ENCODE measurements at regions of chr6 and their contacts with region 1.

Region 1: DNA sequence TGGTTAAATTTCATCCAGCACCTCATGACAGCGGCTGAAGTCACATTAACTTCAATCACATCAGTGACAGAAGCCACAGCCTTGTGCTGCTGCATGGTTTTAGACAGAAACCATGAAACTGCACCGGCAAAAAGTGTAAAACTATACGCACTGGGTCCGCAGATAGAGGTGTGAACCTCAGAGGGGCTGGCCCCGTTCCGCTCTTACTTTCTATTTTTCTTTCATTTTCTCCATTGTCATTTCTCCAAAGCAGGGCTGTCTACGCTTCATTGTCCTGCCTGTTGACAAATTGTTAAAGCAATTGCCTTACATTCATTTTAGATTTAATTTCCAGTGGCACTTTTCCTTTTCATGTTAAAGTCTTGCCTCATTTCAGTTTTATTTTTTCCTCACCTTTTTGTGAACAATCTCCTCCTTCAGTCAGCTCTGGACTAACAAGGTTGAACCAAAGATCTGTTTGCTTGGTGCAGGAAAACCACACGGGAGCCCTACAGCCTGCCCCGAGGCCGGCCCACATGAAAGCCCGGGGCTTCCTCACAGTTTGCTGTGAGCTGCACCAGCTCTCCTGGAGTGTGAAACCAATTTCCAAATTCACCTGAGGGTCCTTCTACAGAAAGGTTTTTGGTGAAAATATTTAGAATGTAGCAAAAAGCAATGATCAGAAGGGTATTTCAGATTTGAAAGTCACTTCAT is 63.7 kb downstream of the PRR18 start:
- DNase-seq: peak; percentile 28
- H3K4me3 Mint-ChIP-seq: peak overlapping the region; percentile 67
- H3K27ac Mint-ChIP-seq: no peak overlapping the region
- H3K4me1 Mint-ChIP-seq: peaks cover 17% of the 10 kb centered on the region
- H3K27me3 Mint-ChIP-seq: peaks cover 49% of the 10 kb centered on the region

Region 2: GRCh38 chr6:166228839-166229528 is 15.5 kb before region 1 on chr6:
- intact Hi-C with region 1: no loop called
- DNase-seq: no peak
- H3K4me3 Mint-ChIP-seq: no peak overlapping the region
- H3K27ac Mint-ChIP-seq: no peak overlapping the region
- H3K4me1 Mint-ChIP-seq: peaks cover 10% of the 10 kb centered on the region
- H3K27me3 Mint-ChIP-seq: peaks cover 27% of the 10 kb centered on the region

Region 3: DNA sequence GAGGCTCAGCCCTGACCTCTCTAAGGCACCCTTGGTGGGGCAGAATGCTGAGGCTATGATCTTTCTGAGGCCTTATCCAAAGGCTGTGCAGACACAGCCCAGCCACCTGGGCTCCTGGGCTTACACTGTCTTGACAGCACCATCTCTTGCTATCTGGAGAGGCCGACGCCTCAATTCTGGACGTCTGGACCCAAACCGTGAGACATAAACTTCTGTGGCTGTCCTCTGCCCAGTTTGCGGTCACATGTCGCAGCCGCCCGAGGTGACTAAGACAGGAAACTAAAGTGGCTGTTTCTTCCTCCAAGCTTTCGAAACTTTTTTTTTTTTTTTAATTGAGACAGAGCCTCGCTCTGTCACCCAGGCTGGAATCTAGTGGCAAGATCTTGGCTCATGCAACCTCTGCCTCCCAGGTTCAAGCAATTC is 14.4 kb after region 1 on chr6:
- intact Hi-C with region 1: loop called (anchors 2 kb)
- DNase-seq: no peak
- H3K4me3 Mint-ChIP-seq: no peak overlapping the region
- H3K27ac Mint-ChIP-seq: no peak overlapping the region
- H3K4me1 Mint-ChIP-seq: peaks cover 22% of the 10 kb centered on the region
- H3K27me3 Mint-ChIP-seq: peaks cover 35% of the 10 kb centered on the region